GM12878 (cell line): ENCODE measurements at regions of chr16 and their contacts with region 1.

Region 1: GRCh38 chr16:78099372-78100161 is at the start of gene WWOX:
- DNase-seq: peak; percentile 88
- ATAC-seq: peak; percentile 95
- H3K4me3 ChIP-seq: peak within 1 kb of the TSS; percentile 81
- H3K27ac ChIP-seq: peak within 1 kb of the TSS; percentile 63
- H3K4me1 ChIP-seq: peaks cover 10% of the 10 kb centered on the region; the same call in 1 of the 2 replicates
- H3K27me3 ChIP-seq: no peaks in the 10 kb centered on the region
- CTCF ChIP-seq: peak; percentile 73 to 95 (median 83)
- EP300 ChIP-seq: no peak
- POLR2A ChIP-seq: peak; percentile 90
- RAD21 ChIP-seq: peak; percentile 41; the same call in 1 of the 2 replicates
- polyA plus RNA-seq, gene WWOX: 2.8 to 4.6 TPM

Region 2: GRCh38 chr16:77211880-77212740 is 887.5 kb before region 1 on chr16:
- CTCF ChIA-PET with region 1: no interaction called
- POLR2A ChIA-PET with region 1: no interaction called
- RAD21 ChIA-PET with region 1: no interaction called
- SMC1A ChIA-PET with region 1: no interaction called
- in situ Hi-C with region 1: loop called (anchors 10 kb)
- intact Hi-C with region 1: no loop called
- DNase-seq: no peak
- ATAC-seq: peak; percentile 83
- H3K4me3 ChIP-seq: peak overlapping the region; percentile 66
- H3K27ac ChIP-seq: no peak overlapping the region
- H3K4me1 ChIP-seq: no peaks in the 10 kb centered on the region; the same call in 1 of the 2 replicates
- H3K27me3 ChIP-seq: no peaks in the 10 kb centered on the region
- CTCF ChIP-seq: no peak
- EP300 ChIP-seq: no peak
- POLR2A ChIP-seq: peak; percentile 75
- RAD21 ChIP-seq: no peak

Region 3: GRCh38 chr16:77885571-77886295 is 213.8 kb before region 1 on chr16:
- CTCF ChIA-PET with region 1: no interaction called
- POLR2A ChIA-PET with region 1: no interaction called
- RAD21 ChIA-PET with region 1: no interaction called
- SMC1A ChIA-PET with region 1: no interaction called
- in situ Hi-C with region 1: no loop called
- intact Hi-C with region 1: no loop called
- DNase-seq: no peak
- ATAC-seq: no peak
- H3K4me3 ChIP-seq: no peak overlapping the region
- H3K27ac ChIP-seq: no peak overlapping the region
- H3K4me1 ChIP-seq: no peaks in the 10 kb centered on the region
- H3K27me3 ChIP-seq: 0 out of 4 replicates have a peak, but pooled peaks cover 0 to 2% of the 10 kb centered on the region in 2 experiments
- CTCF ChIP-seq: no peak
- EP300 ChIP-seq: no peak
- POLR2A ChIP-seq: no peak
- RAD21 ChIP-seq: no peak

Region 4: GRCh38 chr16:78002915-78003538 is 96.5 kb before region 1 on chr16:
- CTCF ChIA-PET with region 1: interaction called, 12 read pairs
- POLR2A ChIA-PET with region 1: no interaction called
- RAD21 ChIA-PET with region 1: interaction called, 3 read pairs
- SMC1A ChIA-PET with region 1: interaction called, 6 read pairs
- in situ Hi-C with region 1: no loop called
- intact Hi-C with region 1: loop called (anchors 2 kb)
- DNase-seq: peak; percentile 51
- ATAC-seq: peak; percentile 97
- H3K4me3 ChIP-seq: no peak overlapping the region
- H3K27ac ChIP-seq: no peak overlapping the region
- H3K4me1 ChIP-seq: no peaks in the 10 kb centered on the region
- H3K27me3 ChIP-seq: no peaks in the 10 kb centered on the region
- CTCF ChIP-seq: peak; percentile 85 to 97 (median 90)
- EP300 ChIP-seq: no peak
- POLR2A ChIP-seq: no peak
- RAD21 ChIP-seq: peak; percentile 84

Region 5: GRCh38 chr16:78060293-78060692 is 39.3 kb before region 1 on chr16:
- CTCF ChIA-PET with region 1: interaction called, 10 read pairs
- POLR2A ChIA-PET with region 1: no interaction called
- RAD21 ChIA-PET with region 1: interaction called, 3 read pairs
- SMC1A ChIA-PET with region 1: no interaction called
- in situ Hi-C with region 1: no loop called
- intact Hi-C with region 1: no loop called
- DNase-seq: no peak
- ATAC-seq: no peak
- H3K4me3 ChIP-seq: no peak overlapping the region
- H3K27ac ChIP-seq: no peak overlapping the region
- H3K4me1 ChIP-seq: no peaks in the 10 kb centered on the region
- H3K27me3 ChIP-seq: no peaks in the 10 kb centered on the region; a peak in 1 of 4 replicates
- CTCF ChIP-seq: no peak
- EP300 ChIP-seq: no peak
- POLR2A ChIP-seq: no peak
- RAD21 ChIP-seq: no peak

Region 6: GRCh38 chr16:78461496-78462191 is 362.1 kb after region 1 on chr16:
- CTCF ChIA-PET with region 1: no interaction called
- POLR2A ChIA-PET with region 1: no interaction called
- RAD21 ChIA-PET with region 1: no interaction called
- SMC1A ChIA-PET with region 1: no interaction called
- in situ Hi-C with region 1: no loop called
- intact Hi-C with region 1: no loop called
- DNase-seq: no peak
- ATAC-seq: no peak
- H3K4me3 ChIP-seq: no peak overlapping the region
- H3K27ac ChIP-seq: no peak overlapping the region
- H3K4me1 ChIP-seq: no peaks in the 10 kb centered on the region
- H3K27me3 ChIP-seq: no peaks in the 10 kb centered on the region
- CTCF ChIP-seq: no peak
- EP300 ChIP-seq: no peak
- POLR2A ChIP-seq: no peak
- RAD21 ChIP-seq: no peak